Posterior vena cava (tissue), 2 donors: ENCODE measurements at regions of chr3 and their contacts with region 1.

Region 1: GRCh38 chr3:177185035-177185574 is 12.2 kb downstream of the TBL1XR1 start:
- DNase-seq: no peak

Region 2: GRCh38 chr3:176987901-176988650 is 197.0 kb before region 1 on chr3:
- intact Hi-C with region 1: no loop called
- DNase-seq: no peak

Region 3: GRCh38 chr3:177069514-177070329 is 115.4 kb before region 1 on chr3:
- intact Hi-C with region 1: loop called in 1 of 2 experiments (anchors 10 kb)
- DNase-seq: no peak

Region 4: GRCh38 chr3:177358091-177358976 is 173.2 kb after region 1 on chr3:
- intact Hi-C with region 1: no loop called
- DNase-seq: peak; percentile 89

Region 5: GRCh38 chr3:178880274-178880673 is 1695.2 kb after region 1 on chr3:
- intact Hi-C with region 1: loop called in 1 of 2 experiments (anchors 5 kb)
- DNase-seq: no peak